ENCODE measurements at regions of chr17 and their contacts with region 1.

Region 1: DNA sequence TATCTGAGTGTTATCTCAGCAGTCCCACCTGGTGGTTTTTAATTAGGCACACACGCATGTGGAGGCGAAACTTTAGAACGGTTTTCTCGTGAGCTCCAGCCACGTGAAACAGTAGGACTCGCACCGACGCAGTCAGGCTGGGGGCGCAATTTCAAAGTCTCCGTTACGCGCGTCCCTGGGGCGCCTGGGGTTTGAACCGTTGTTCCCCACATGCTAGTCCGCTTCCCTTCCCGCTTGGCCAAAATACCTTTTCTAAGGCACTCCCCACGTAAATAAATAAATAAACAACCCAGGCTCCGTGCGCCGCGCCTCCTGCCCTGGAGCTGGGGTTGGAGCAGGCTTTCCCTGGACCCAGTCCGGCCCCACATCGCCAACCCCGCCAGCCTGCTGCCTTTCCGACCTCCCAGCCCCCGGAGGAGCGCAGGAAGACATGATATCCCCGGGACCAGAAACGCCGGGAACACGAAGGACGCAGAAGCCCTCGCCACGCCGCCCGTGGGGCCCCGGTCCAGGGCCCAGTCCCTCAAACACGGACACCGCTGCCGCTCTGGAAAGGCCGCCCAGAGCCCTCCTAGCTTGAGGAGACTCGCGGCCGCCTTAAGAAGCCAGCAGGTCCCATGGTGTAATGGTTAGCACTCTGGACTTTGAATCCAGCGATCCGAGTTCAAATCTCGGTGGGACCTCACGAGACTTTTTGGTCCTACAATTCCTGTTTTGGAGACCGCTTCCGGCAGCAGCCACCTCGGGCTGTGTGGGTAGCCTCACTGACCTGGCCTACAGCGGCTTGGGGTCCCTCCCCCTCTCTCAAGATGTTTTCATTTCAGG is 18.2 kb downstream of the GNGT2 start:
- DNase-seq: peak; percentile 63 to 99 (median 88)
- ATAC-seq: peak; percentile 60 to 65 (median 64)
- H3K4me3 ChIP-seq: peak overlapping the region; percentile 80 to 87
- H3K4me3 Mint-ChIP-seq: peak overlapping the region; percentile 83 to 96 (median 89)
- H3K27ac ChIP-seq: peak overlapping the region; percentile 91
- H3K27ac Mint-ChIP-seq: peak overlapping the region; percentile 95 to 99
- H3K4me1 ChIP-seq: peaks cover 4 to 27% of the 10 kb centered on the region in 2 experiments
- H3K4me1 Mint-ChIP-seq: peaks cover 23 to 35% (median 31%) of the 10 kb centered on the region in 3 donors
- H3K27me3 ChIP-seq: no peaks in the 10 kb centered on the region
- H3K27me3 Mint-ChIP-seq: no peaks in the 10 kb centered on the region

Region 2: GRCh38 chr17:49210158-49211029 is 18.3 kb after region 1 on chr17 and contains the starts of genes ABI3 and GNGT2:
- CTCF ChIA-PET with region 1: interaction called in 1 of 2 experiments, 19 read pairs
- POLR2A ChIA-PET with region 1: interaction called in 1 of 2 experiments, 4 read pairs
- DNase-seq: peak in 34 of 35 experiments; percentile 27 to 80 (median 47)
- ATAC-seq: peak; percentile 85 to 87 (median 86)
- H3K4me3 ChIP-seq: peak within 1 kb of the TSS; percentile 60 to 86
- H3K4me3 Mint-ChIP-seq: peak within 1 kb of the TSS; percentile 88 to 92 (median 91)
- H3K27ac ChIP-seq: peak within 1 kb of the TSS; percentile 70
- H3K27ac Mint-ChIP-seq: peak within 1 kb of the TSS; percentile 92 to 93
- H3K4me1 ChIP-seq: peaks cover 44 to 84% of the 10 kb centered on the region in 2 experiments
- H3K4me1 Mint-ChIP-seq: peaks cover 71 to 78% (median 75%) of the 10 kb centered on the region in 3 donors
- H3K27me3 ChIP-seq: no peaks in the 10 kb centered on the region
- H3K27me3 Mint-ChIP-seq: no peaks in the 10 kb centered on the region
- total RNA-seq, gene ABI3: 10.4 to 21.7 (median 18.3) TPM
- total RNA-seq, gene GNGT2: 4.5 to 6.3 (median 5.0) TPM

Region 3: DNA sequence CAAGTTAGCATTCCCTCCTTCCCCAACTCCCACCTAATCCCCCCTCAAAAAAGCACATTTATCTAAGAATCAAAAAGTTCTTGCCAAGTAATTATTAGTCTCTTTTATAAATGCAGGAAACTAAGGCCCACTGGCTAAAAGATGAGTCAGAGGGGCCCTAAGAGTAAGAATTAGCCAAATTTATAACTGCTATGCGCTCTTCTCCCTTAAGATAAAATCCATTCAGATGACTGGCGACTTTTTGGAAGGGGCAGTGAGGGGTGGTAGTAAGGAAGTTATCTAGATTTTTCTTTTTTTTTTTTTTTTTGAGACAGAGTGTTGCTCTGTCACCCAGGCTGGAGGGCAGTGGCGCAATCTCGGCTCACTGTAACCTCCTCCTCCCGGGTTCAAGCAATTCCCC is 152.8 kb after region 1 on chr17:
- CTCF ChIA-PET with region 1: no interaction called
- POLR2A ChIA-PET with region 1: no interaction called
- DNase-seq: no peak
- ATAC-seq: no peak
- H3K4me3 ChIP-seq: no peak overlapping the region
- H3K4me3 Mint-ChIP-seq: peak overlapping the region in 1 of 3 donors; percentile 37
- H3K27ac ChIP-seq: no peak overlapping the region
- H3K27ac Mint-ChIP-seq: peak overlapping the region in 1 of 2 donors; percentile 55
- H3K4me1 ChIP-seq: peaks cover 17 to 64% of the 10 kb centered on the region in 2 experiments
- H3K4me1 Mint-ChIP-seq: peaks cover 56 to 73% (median 65%) of the 10 kb centered on the region in 3 donors
- H3K27me3 ChIP-seq: no peaks in the 10 kb centered on the region
- H3K27me3 Mint-ChIP-seq: no peaks in the 10 kb centered on the region

Region 4: GRCh38 chr17:49567871-49568694 is 376.0 kb after region 1 on chr17:
- CTCF ChIA-PET with region 1: no interaction called
- POLR2A ChIA-PET with region 1: no interaction called
- DNase-seq: peak; percentile 32 to 84 (median 72)
- ATAC-seq: peak; percentile 48 to 55 (median 52)
- H3K4me3 ChIP-seq: peak overlapping the region; percentile 12 to 48
- H3K4me3 Mint-ChIP-seq: peak overlapping the region; percentile 49 to 69 (median 67)
- H3K27ac ChIP-seq: no peak overlapping the region
- H3K27ac Mint-ChIP-seq: peak overlapping the region in 1 of 2 donors; percentile 11
- H3K4me1 ChIP-seq: peaks cover 0 to 29% of the 10 kb centered on the region in 2 experiments
- H3K4me1 Mint-ChIP-seq: peaks cover 13 to 17% (median 16%) of the 10 kb centered on the region in 3 donors
- H3K27me3 ChIP-seq: peaks cover 0 to 46% of the 10 kb centered on the region in 2 experiments
- H3K27me3 Mint-ChIP-seq: peaks cover 4 to 26% of the 10 kb centered on the region in 2 donors

Region 5: DNA sequence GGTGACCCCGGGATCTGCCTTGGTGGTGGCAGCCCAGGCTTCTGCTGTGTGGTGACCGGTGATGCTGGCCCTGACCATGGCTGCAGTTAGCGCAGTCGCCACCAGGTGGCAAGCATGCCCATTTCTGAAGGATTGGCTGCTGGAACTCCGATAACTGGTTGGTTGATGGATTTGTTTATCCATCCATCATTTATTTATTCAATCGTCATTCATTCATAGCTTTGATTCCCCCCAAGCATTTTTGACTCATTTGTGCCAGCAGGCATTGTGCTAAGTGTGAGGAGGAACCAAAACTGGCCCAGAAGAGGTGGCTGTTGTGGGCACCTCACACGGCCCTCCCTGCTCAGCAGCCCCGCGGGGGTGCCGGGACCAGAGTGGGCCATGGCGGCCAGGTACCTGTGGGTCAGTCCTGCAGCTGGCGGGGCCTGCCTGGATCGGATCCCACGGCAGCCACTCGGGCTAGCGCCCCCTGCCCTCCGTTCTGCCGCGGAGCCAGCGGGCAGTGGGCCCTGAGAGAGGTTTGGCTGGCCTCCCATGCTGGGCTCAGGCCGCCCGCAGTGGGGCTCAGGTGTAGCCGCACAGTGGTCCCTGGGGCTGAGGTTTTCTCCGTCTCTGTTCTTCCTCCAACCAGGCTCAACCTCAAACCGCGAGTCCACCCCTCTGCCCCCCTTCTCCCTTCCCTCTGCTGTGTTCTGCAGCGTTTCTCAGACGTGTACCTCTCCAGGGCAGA is 834.9 kb after region 1 on chr17:
- CTCF ChIA-PET with region 1: no interaction called
- POLR2A ChIA-PET with region 1: no interaction called
- DNase-seq: peak; percentile 23 to 86 (median 64)
- ATAC-seq: peak; percentile 73 to 81 (median 78)
- H3K4me3 ChIP-seq: peak overlapping the region in 1 of 2 donors; percentile 23
- H3K4me3 Mint-ChIP-seq: peak overlapping the region in 2 of 3 donors; percentile 5 to 53
- H3K27ac ChIP-seq: no peak overlapping the region
- H3K27ac Mint-ChIP-seq: peak overlapping the region in 1 of 2 donors; percentile 16
- H3K4me1 ChIP-seq: peaks cover 0 to 11% of the 10 kb centered on the region in 2 experiments
- H3K4me1 Mint-ChIP-seq: peaks cover 11 to 17% (median 16%) of the 10 kb centered on the region in 3 donors
- H3K27me3 ChIP-seq: peaks cover 0 to 40% of the 10 kb centered on the region in 2 experiments
- H3K27me3 Mint-ChIP-seq: peaks cover 22 to 24% of the 10 kb centered on the region in 2 donors